T-cell (primary cell): ENCODE measurements at regions of chr14 and their contacts with region 1.

Region 1: DNA sequence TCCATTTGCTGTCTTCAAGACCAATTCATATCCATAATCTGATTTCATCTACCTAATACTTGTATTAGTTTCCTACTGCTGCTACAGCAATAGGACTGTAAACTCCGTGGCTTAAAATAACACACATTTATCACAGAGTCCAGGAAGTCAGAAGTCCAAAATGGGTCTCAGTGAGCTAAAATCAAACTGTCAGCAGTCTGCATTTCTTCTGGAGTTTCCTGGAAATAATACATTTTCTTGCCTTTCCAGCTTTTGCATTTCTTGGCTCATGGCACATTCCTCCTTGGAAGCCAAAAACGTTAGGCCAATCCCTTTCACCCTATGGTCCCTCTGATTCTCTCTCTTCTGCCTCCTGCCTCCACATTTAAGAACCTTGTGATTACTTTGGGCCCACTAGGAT is 239.8 kb downstream of the PRKD1 start:
- DNase-seq: no peak
- ATAC-seq: no peak
- H3K4me3 ChIP-seq: no peak overlapping the region
- H3K4me3 Mint-ChIP-seq: no peak overlapping the region
- H3K27ac ChIP-seq: no peak overlapping the region
- H3K27ac Mint-ChIP-seq: no peak overlapping the region
- H3K4me1 ChIP-seq: no peaks in the 10 kb centered on the region
- H3K4me1 Mint-ChIP-seq: no peaks in the 10 kb centered on the region
- H3K27me3 ChIP-seq: no peaks in the 10 kb centered on the region
- H3K27me3 Mint-ChIP-seq: no peaks in the 10 kb centered on the region

Region 2: GRCh38 chr14:29301571-29301970 is 386.3 kb before region 1 on chr14:
- CTCF ChIA-PET with region 1: no interaction called
- POLR2A ChIA-PET with region 1: no interaction called
- DNase-seq: no peak
- ATAC-seq: no peak
- H3K4me3 ChIP-seq: no peak overlapping the region
- H3K4me3 Mint-ChIP-seq: no peak overlapping the region
- H3K27ac ChIP-seq: no peak overlapping the region
- H3K27ac Mint-ChIP-seq: no peak overlapping the region
- H3K4me1 ChIP-seq: no peaks in the 10 kb centered on the region
- H3K4me1 Mint-ChIP-seq: no peaks in the 10 kb centered on the region
- H3K27me3 ChIP-seq: no peaks in the 10 kb centered on the region
- H3K27me3 Mint-ChIP-seq: no peaks in the 10 kb centered on the region

Region 3: DNA sequence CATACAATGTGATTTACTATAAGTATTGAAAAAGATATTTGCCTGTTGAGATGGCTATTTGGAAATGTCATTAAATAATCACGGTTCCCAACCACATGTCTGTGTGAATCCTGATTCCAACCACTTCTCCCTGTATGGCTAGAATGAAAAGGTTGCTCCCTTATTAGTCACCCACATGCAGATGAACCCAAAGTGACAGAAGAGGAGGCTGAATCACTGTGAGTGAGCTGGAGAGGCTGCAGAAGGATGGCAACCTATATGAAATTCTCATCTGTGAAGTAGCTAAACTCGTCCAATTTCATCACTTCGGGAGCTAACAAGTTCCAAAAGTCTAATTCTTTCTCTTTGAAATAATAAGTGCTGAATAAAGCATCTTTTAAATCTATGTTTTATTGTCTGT is 60.7 kb before region 1 on chr14:
- CTCF ChIA-PET with region 1: no interaction called
- POLR2A ChIA-PET with region 1: no interaction called
- DNase-seq: no peak
- ATAC-seq: no peak
- H3K4me3 ChIP-seq: no peak overlapping the region
- H3K4me3 Mint-ChIP-seq: no peak overlapping the region
- H3K27ac ChIP-seq: no peak overlapping the region
- H3K27ac Mint-ChIP-seq: no peak overlapping the region
- H3K4me1 ChIP-seq: no peaks in the 10 kb centered on the region
- H3K4me1 Mint-ChIP-seq: no peaks in the 10 kb centered on the region
- H3K27me3 ChIP-seq: no peaks in the 10 kb centered on the region
- H3K27me3 Mint-ChIP-seq: no peaks in the 10 kb centered on the region

Region 4: GRCh38 chr14:29671034-29671433 is 16.8 kb before region 1 on chr14:
- CTCF ChIA-PET with region 1: no interaction called
- POLR2A ChIA-PET with region 1: no interaction called
- DNase-seq: no peak
- ATAC-seq: no peak
- H3K4me3 ChIP-seq: no peak overlapping the region
- H3K4me3 Mint-ChIP-seq: no peak overlapping the region
- H3K27ac ChIP-seq: no peak overlapping the region
- H3K27ac Mint-ChIP-seq: no peak overlapping the region
- H3K4me1 ChIP-seq: no peaks in the 10 kb centered on the region
- H3K4me1 Mint-ChIP-seq: no peaks in the 10 kb centered on the region
- H3K27me3 ChIP-seq: no peaks in the 10 kb centered on the region
- H3K27me3 Mint-ChIP-seq: no peaks in the 10 kb centered on the region

Region 5: DNA sequence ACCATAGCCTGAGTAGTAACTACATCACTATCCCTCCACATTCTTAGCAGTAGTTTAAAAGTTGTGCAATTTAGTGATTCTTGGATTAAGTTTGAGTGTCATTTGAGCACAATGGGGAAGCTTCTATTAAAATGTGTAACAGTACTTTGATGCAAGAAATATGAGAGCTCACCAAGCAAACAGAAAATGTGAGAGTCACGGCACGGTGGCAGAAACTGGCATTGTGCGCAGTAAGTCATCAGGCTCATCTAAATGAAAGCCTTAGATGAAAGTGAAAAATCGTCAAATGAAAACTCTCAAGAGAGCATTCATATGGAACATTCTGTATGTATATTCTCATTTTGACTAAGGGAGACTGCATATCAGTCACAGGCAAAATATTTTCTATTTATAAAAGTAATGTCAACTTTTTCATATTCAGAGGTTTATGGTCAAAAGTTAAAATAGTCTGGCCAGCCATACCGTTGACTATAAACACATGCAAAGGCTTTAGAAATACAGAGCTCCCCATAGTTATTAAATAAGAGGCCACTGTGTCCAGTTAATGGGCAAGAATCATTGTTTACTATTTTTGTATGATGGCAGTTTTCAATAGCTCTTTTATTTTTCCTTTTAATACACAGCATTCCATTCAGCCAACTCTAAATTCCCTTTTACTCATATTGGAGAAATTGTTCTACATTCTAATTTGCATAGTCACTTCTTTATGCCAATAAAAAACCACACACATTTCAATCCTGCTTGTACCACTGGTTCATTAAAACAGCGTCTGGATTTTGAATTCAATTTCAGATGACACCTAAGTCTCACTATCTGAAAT is 71.9 kb after region 1 on chr14:
- CTCF ChIA-PET with region 1: no interaction called
- POLR2A ChIA-PET with region 1: interaction called in 1 of 2 experiments, 10 read pairs
- DNase-seq: no peak
- ATAC-seq: no peak
- H3K4me3 ChIP-seq: no peak overlapping the region
- H3K4me3 Mint-ChIP-seq: no peak overlapping the region
- H3K27ac ChIP-seq: no peak overlapping the region
- H3K27ac Mint-ChIP-seq: no peak overlapping the region
- H3K4me1 ChIP-seq: no peaks in the 10 kb centered on the region
- H3K4me1 Mint-ChIP-seq: no peaks in the 10 kb centered on the region
- H3K27me3 ChIP-seq: no peaks in the 10 kb centered on the region
- H3K27me3 Mint-ChIP-seq: no peaks in the 10 kb centered on the region